ENCODE measurements at regions of chr19 and their contacts with region 1.

Region 1: DNA sequence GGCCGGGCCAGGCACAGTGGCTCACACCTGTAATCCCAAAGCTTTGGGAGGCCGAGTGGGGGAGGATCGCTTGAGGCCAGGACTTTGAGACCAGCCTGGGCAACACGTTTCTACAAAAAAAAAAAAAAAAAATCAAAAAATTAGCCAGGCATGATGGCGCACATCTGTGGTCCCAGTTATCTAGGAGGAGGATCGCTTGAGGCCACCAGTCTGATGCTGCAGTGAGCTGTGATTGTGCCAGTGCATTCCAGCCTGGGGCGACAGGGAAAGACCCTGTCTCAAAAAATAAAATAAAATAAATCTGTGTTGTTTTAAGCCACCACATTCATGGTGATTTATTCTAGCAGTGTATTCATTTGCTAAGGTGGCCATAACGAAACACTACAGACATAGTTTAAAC is 4.1 kb upstream of the DACT3 start:
- DNase-seq: no peak
- H3K4me3 ChIP-seq: no peak overlapping the region
- H3K27ac ChIP-seq: no peak overlapping the region
- H3K4me1 ChIP-seq: peaks cover 17% of the 10 kb centered on the region
- H3K27me3 ChIP-seq: peaks cover 3% of the 10 kb centered on the region
- CTCF ChIP-seq: no peak

Region 2: DNA sequence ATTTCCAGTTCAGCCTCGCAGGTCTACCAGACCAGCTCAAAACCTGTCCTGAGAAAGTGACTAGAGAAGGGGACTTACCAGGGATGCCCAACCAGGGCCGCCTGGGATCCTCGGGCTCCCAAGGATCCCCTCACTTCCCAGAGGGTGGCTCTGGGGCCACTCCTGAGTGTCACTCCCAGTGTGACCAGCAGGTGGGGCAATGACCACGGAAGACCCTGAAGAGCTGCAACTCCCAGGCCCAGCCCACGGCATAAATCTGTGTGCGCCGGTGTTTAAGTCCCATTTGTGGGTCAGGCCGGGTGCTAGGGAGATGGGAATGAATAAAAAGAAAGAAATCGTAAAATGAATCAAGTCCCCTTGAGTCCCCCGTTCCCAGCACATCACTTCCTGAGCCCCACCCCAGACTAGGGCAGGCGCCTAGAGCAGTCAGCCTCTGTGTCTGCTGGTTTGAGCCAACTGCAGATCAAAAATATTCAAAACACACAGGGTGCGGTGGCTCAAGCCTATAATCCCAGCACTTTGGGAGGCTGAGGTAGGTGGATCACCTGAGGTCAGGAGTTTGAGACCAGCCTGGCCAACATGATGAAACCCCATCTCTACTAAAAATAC is 50.9 kb before region 1 on chr19:
- intact Hi-C with region 1: loop called (anchors 2 kb)
- DNase-seq: peak; percentile 86
- H3K4me3 ChIP-seq: no peak overlapping the region
- H3K27ac ChIP-seq: no peak overlapping the region
- H3K4me1 ChIP-seq: peaks cover 33% of the 10 kb centered on the region
- H3K27me3 ChIP-seq: no peaks in the 10 kb centered on the region
- CTCF ChIP-seq: peak; percentile 95

Region 3: GRCh38 chr19:46746281-46747013 is 81.4 kb after region 1 on chr19 and contains the start of gene STRN4:
- intact Hi-C with region 1: no loop called
- DNase-seq: peak; percentile 55
- H3K4me3 ChIP-seq: peak within 1 kb of the TSS; percentile 98
- H3K27ac ChIP-seq: peak within 1 kb of the TSS; percentile 91
- H3K4me1 ChIP-seq: peaks cover 55% of the 10 kb centered on the region
- H3K27me3 ChIP-seq: no peaks in the 10 kb centered on the region
- CTCF ChIP-seq: no peak
- total RNA-seq, gene STRN4: 52.7 TPM

Measured in left ventricle myocardium inferior (tissue), 1 donor.